ENCODE measurements at regions of chr11 and their contacts with region 1.

Region 1: GRCh38 chr11:44943118-44943517 is 7.6 kb downstream of the TP53I11 start:
- DNase-seq: peak in 2 of 3 donors; percentile 81 to 85
- H3K4me3 ChIP-seq: peak overlapping the region in 2 of 7 experiments; percentile 12 to 31
- H3K27ac ChIP-seq: no peak overlapping the region
- H3K4me1 ChIP-seq: peaks cover 3 to 57% (median 36%) of the 10 kb centered on the region in 4 experiments
- H3K27me3 ChIP-seq: no peaks in the 10 kb centered on the region

Region 2: DNA sequence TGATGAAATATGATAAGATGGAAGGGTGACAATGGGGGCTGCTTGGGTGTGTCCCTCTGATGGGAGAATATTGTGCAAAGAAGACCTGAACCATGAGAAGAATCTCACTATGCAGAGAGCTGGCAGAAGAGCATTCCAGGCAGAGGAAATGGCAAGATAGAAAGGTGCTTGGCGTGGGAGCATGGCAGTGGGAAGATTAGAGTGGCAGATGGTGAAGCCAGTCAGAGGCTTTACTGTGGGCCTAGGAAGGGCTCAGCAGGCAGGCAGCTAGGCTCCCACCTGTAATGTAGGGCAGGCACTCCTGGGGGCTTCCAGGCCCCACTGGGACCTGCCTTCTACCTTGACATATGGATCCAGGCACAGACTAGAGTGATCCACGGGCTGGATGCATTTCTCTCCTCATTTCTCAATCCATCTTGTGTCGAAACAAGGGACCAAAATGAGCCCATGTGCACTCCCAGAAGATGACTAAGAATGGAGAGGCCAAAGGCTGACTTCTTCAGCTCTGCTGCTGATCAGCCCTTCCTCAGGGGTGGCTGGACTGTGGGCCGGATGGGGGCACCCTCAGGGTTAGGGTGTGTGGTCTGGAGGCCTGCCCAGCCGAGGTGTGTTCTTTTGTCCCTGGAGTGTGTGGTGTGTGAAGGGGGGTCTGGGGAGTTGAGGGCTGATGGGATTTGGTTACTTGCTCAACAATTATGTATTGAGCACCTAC is 128.1 kb before region 1 on chr11:
- CTCF ChIA-PET with region 1: no interaction called
- POLR2A ChIA-PET with region 1: no interaction called
- DNase-seq: peak; percentile 17 to 65 (median 62)
- H3K4me3 ChIP-seq: no peak overlapping the region
- H3K27ac ChIP-seq: no peak overlapping the region
- H3K4me1 ChIP-seq: peaks cover 0 to 29% (median 4%) of the 10 kb centered on the region in 4 experiments
- H3K27me3 ChIP-seq: no peaks in the 10 kb centered on the region

Region 3: DNA sequence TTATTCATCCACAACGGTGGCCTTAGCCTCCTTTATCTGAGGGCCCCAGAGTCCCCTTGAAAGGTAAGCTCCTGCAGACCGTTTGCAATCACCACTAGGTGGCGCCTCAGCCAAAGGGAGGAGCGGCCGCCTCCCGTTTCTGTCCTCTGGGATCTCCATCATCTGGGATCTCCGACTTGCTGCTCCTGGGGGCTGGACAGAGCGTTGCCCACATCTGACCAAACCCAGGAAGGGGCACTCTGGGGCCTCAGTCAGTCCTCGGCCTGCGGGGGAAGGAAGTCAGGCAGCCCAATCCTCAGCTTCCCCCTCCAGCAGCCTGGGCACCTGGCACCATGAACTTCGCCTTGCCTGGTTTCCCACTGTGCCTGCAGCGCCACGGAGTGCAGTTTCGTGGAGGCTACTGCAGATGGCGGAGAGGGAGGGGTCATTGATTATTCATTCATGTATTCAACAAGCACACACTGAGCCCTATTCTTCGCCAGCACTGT is 15.9 kb before region 1 on chr11:
- CTCF ChIA-PET with region 1: interaction called, 36 read pairs
- POLR2A ChIA-PET with region 1: no interaction called
- DNase-seq: peak in 2 of 3 donors; percentile 59 to 60
- H3K4me3 ChIP-seq: no peak overlapping the region
- H3K27ac ChIP-seq: no peak overlapping the region
- H3K4me1 ChIP-seq: peaks cover 0 to 6% (median 3%) of the 10 kb centered on the region in 4 experiments
- H3K27me3 ChIP-seq: peaks cover 0 to 1% (median 0%) of the 10 kb centered on the region in 5 experiments

Region 4: GRCh38 chr11:45043755-45044475 is 100.8 kb after region 1 on chr11:
- CTCF ChIA-PET with region 1: no interaction called
- POLR2A ChIA-PET with region 1: no interaction called
- DNase-seq: no peak
- H3K4me3 ChIP-seq: no peak overlapping the region
- H3K27ac ChIP-seq: no peak overlapping the region
- H3K4me1 ChIP-seq: peaks cover 3 to 25% (median 18%) of the 10 kb centered on the region in 4 experiments
- H3K27me3 ChIP-seq: peaks cover 0 to 3% (median 0%) of the 10 kb centered on the region in 5 experiments

Measured in common myeloid progenitor, CD34-positive (primary cell).